ENCODE measurements at regions of chr9 and their contacts with region 1.

Region 1: DNA sequence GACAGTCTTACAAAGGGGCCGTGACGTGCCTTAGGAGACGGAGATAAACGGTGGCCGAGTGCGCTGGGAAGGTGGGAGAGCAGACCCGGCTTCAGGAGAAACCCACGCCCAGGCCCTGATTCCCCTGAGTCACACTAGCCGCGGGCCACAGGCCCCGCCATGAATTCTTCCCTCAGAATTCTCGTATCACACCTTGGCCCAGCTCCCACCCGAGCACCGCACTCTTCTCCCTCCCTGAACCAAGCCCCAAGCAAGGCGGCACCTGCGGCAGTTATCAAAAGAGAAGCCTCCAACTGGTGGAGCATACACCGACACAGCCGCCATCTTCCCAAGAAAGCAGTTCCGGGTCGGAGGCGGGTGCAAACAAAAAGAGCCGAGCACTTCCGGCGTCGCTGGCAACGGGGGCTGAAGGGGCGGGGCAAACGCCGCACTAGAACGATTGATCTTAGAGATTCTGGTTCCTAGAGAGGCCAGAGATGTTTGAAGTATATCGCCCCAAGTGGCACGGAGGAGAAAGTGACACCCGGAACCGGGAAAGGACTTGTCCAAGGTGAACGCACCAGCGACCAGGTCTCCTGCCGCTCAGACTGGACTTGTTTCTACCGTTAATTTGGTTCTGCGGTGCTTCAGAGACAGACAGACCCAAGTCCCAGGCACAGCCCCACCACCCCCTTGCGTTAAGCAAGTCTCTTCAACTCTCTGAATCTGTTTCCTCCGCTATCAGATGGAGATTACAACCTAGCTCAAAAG is at the start of gene PSMB7:
- DNase-seq: peak; percentile 95 to 99 (median 98)
- ATAC-seq: peak; percentile 91
- H3K4me3 ChIP-seq: peak within 1 kb of the TSS; percentile 91
- H3K4me3 Mint-ChIP-seq: peak within 1 kb of the TSS; percentile 94
- H3K27ac ChIP-seq: peak within 1 kb of the TSS in 1 of 2 donors; percentile 72
- H3K27ac Mint-ChIP-seq: peak within 1 kb of the TSS; percentile 86
- H3K4me1 ChIP-seq: peaks cover 23% of the 10 kb centered on the region
- H3K4me1 Mint-ChIP-seq: peaks cover 28% of the 10 kb centered on the region
- H3K27me3 ChIP-seq: no peaks in the 10 kb centered on the region
- H3K27me3 Mint-ChIP-seq: no peaks in the 10 kb centered on the region
- CTCF ChIP-seq: peak; percentile 89
- total RNA-seq, gene PSMB7: 69.3 to 71.7 TPM

Region 2: DNA sequence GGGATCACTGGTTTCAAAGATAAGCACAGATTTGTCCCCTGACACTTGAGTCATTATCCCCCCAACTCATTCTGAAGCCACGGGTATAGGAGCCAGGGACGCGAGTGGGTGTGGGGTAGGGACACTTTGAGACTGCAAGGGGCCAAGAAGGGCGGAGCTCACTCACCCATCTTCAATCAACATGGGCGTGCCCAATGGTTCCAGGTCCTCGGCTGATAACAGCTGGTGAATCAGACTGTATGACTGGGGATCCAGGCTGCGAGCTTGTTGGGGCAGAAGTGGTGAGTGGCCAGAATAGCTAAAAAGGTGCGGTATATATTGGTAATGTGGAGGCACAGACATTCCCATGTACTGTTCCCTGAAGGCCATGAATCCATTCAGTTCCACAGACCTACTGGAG is 122.6 kb after region 1 on chr9:
- CTCF ChIA-PET with region 1: no interaction called
- POLR2A ChIA-PET with region 1: no interaction called
- intact Hi-C with region 1: loop called in 1 of 2 experiments (anchors 1 kb)
- DNase-seq: no peak
- ATAC-seq: no peak
- H3K4me3 ChIP-seq: no peak overlapping the region
- H3K4me3 Mint-ChIP-seq: no peak overlapping the region
- H3K27ac ChIP-seq: no peak overlapping the region
- H3K27ac Mint-ChIP-seq: no peak overlapping the region
- H3K4me1 ChIP-seq: no peaks in the 10 kb centered on the region
- H3K4me1 Mint-ChIP-seq: no peaks in the 10 kb centered on the region
- H3K27me3 ChIP-seq: no peaks in the 10 kb centered on the region
- H3K27me3 Mint-ChIP-seq: peaks cover 4% of the 10 kb centered on the region
- CTCF ChIP-seq: no peak

Region 3: DNA sequence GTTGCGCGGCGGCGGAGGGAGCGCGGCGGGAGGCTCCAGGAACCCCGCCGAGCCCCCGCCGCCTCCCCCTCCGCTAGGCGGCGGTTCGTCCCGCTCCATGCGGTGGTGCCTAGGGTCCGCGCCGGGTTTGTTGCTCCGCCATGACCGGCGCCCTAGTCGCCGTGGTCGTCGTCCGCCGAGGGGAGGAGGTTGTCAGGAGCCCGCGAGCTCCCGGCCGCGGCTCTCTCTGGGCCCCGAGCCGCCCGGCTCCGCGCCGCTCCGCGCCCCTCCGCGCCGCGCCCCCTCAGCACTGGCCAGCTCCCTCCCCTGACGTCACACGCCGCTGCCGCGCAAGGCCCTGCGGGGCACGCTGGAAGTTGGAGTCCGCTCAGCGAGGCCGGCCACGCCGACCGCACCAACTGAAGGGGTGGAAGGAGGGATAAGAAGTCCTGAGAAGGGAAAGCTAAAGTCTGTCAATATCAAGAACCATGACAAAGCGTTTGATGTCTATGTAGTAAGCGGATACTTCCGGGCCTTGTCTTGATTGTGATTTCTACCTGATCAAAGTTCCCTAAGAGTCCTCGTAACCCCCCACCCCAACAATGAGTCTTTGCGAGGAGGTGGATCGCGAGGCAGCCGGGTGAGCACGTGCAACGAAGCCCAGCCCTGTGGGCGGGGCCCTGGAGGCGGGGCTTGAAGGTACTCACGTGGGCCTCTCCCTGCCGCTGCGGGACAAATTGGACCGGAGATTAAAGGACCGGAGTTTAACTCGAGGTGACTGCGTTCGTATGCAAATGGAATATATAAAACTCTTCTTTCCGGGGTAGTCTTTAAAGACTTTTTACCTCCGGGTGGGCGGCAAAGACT is 356.0 kb after region 1 on chr9 and contains the start of gene NR6A1:
- CTCF ChIA-PET with region 1: no interaction called
- POLR2A ChIA-PET with region 1: no interaction called
- intact Hi-C with region 1: loop called in 1 of 2 experiments (anchors 5 kb)
- DNase-seq: peak; percentile 81 to 97 (median 90)
- ATAC-seq: peak; percentile 88
- H3K4me3 ChIP-seq: peak within 1 kb of the TSS; percentile 59
- H3K4me3 Mint-ChIP-seq: peak within 1 kb of the TSS; percentile 90
- H3K27ac ChIP-seq: no peak within 1 kb of the TSS
- H3K27ac Mint-ChIP-seq: peak within 1 kb of the TSS; percentile 32
- H3K4me1 ChIP-seq: peaks cover 32% of the 10 kb centered on the region
- H3K4me1 Mint-ChIP-seq: peaks cover 39% of the 10 kb centered on the region
- H3K27me3 ChIP-seq: peaks cover 34 to 71% of the 10 kb centered on the region in 2 experiments
- H3K27me3 Mint-ChIP-seq: peaks cover 87% of the 10 kb centered on the region
- CTCF ChIP-seq: no peak
- total RNA-seq, gene NR6A1: not detected

Region 4: GRCh38 chr9:125261501-125262293 is 846.4 kb after region 1 on chr9 and contains the start of gene GAPVD1:
- CTCF ChIA-PET with region 1: no interaction called
- POLR2A ChIA-PET with region 1: no interaction called
- intact Hi-C with region 1: loop called in 1 of 2 experiments (anchors 5 kb)
- DNase-seq: peak; percentile 75 to 94 (median 84)
- ATAC-seq: peak; percentile 89
- H3K4me3 ChIP-seq: peak within 1 kb of the TSS; percentile 100
- H3K4me3 Mint-ChIP-seq: peak within 1 kb of the TSS; percentile 92
- H3K27ac ChIP-seq: peak within 1 kb of the TSS; percentile 77 to 83
- H3K27ac Mint-ChIP-seq: peak within 1 kb of the TSS; percentile 83
- H3K4me1 ChIP-seq: peaks cover 30% of the 10 kb centered on the region
- H3K4me1 Mint-ChIP-seq: peaks cover 51% of the 10 kb centered on the region
- H3K27me3 ChIP-seq: no peaks in the 10 kb centered on the region
- H3K27me3 Mint-ChIP-seq: no peaks in the 10 kb centered on the region
- CTCF ChIP-seq: no peak
- total RNA-seq, gene GAPVD1: 74.1 to 82.2 TPM

Measured in CD4-positive, alpha-beta T cell (primary cell).